ENCODE measurements at regions of chr2 and their contacts with region 1.

Region 1: GRCh38 chr2:162063899-162064298 is 10.1 kb downstream of the DPP4 start:
- DNase-seq: no peak
- ATAC-seq: no peak
- H3K4me3 ChIP-seq: no peak overlapping the region
- H3K27ac ChIP-seq: peak overlapping the region in 1 of 12 donors; percentile 35
- H3K4me1 ChIP-seq: peaks cover 0 to 7% (median 0%) of the 10 kb centered on the region in 12 donors
- H3K27me3 ChIP-seq: no peaks in the 10 kb centered on the region
- CTCF ChIP-seq: no peak
- POLR2A ChIP-seq: no peak

Region 2: GRCh38 chr2:162013514-162014475 is 50.1 kb before region 1 on chr2:
- intact Hi-C with region 1: loop called in 1 of 10 experiments (anchors 10 kb)
- DNase-seq: no peak
- ATAC-seq: peak in 1 of 4 donors; percentile 61
- H3K4me3 ChIP-seq: peak overlapping the region in 5 of 12 donors; percentile 1 to 27 (median 20)
- H3K27ac ChIP-seq: peak overlapping the region in 9 of 12 donors; percentile 0 to 73 (median 9)
- H3K4me1 ChIP-seq: peaks cover 0 to 28% (median 0%) of the 10 kb centered on the region in 12 donors
- H3K27me3 ChIP-seq: no peaks in the 10 kb centered on the region
- CTCF ChIP-seq: no peak
- POLR2A ChIP-seq: no peak

Region 3: GRCh38 chr2:162030363-162031190 is 33.3 kb before region 1 on chr2:
- intact Hi-C with region 1: loop called in 1 of 10 experiments (anchors 5 kb)
- DNase-seq: no peak
- ATAC-seq: no peak
- H3K4me3 ChIP-seq: no peak overlapping the region
- H3K27ac ChIP-seq: peak overlapping the region in 2 of 12 donors; percentile 4 to 24
- H3K4me1 ChIP-seq: peaks cover 0 to 29% (median 10%) of the 10 kb centered on the region in 12 donors
- H3K27me3 ChIP-seq: no peaks in the 10 kb centered on the region
- CTCF ChIP-seq: no peak
- POLR2A ChIP-seq: no peak

Region 4: GRCh38 chr2:162113776-162114168 is 49.9 kb after region 1 on chr2:
- intact Hi-C with region 1: loop called in 1 of 10 experiments (anchors 10 kb)
- DNase-seq: peak in 2 of 5 donors; percentile 29 to 38
- ATAC-seq: peak; percentile 90 to 98 (median 93)
- H3K4me3 ChIP-seq: no peak overlapping the region
- H3K27ac ChIP-seq: peak overlapping the region in 3 of 12 donors; percentile 42 to 49 (median 47)
- H3K4me1 ChIP-seq: peaks cover 0 to 36% (median 19%) of the 10 kb centered on the region in 12 donors
- H3K27me3 ChIP-seq: no peaks in the 10 kb centered on the region
- CTCF ChIP-seq: no peak
- POLR2A ChIP-seq: no peak

Measured in heart left ventricle (tissue), 16 donors.